IMR-90 (cell line): ENCODE measurements at regions of chr2 and their contacts with region 1.

Region 1: GRCh38 chr2:25131567-25132298 is 36.6 kb downstream of the POMC start:
- DNase-seq: no peak
- ATAC-seq: no peak
- H3K4me3 ChIP-seq: no peak overlapping the region
- H3K27ac ChIP-seq: no peak overlapping the region
- H3K4me1 ChIP-seq: peaks cover 1% of the 10 kb centered on the region; the same call in 1 of the 2 replicates
- H3K27me3 ChIP-seq: peaks cover 6% of the 10 kb centered on the region
- CTCF ChIP-seq: no peak
- POLR2A ChIP-seq: no peak
- RAD21 ChIP-seq: no peak

Region 2: DNA sequence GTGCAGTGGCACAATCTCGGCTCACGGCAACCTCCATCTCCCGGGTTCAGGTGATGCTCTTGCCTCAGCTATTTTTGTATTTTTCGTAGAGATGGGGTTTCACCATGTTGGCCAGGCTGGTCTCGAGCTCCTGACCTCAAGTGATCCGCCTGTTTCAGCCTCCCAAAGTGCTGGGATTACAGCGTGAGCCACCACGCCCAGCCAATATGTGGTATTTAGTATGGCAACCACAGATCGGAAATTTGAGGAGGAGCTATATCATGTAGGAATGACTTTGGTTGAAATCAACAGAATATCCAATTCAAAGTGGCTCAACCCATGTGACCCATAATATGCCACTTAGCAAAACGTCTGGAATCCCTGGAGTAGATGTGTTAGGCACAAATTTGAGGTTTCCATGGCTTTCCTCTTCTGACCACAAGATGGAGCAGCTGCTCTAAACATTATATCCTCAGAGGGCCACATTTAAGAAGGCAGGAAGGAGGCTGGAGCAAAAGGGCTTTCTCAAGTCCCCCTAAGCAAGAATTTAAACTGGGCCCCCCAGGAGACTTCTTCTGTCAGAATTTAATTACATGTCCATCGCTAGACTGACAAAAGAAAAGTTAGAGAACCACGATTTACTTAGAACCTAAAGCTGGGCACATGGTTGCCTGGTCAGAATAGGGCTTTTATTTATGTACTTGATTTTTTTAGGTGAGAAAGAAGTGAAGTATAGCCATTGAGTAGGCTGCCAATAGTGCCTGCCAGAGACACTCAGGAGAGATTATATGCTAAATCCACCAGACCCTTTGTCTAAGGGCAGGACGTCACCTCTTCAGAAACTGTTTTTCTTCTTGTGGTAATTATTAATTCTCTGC is 721.8 kb before region 1 on chr2:
- CTCF ChIA-PET with region 1: interaction called, 5 read pairs
- POLR2A ChIA-PET with region 1: no interaction called
- dilution Hi-C with region 1: no loop called
- in situ Hi-C with region 1: loop called (anchors 25 kb)
- intact Hi-C with region 1: loop called (anchors 1 kb)
- DNase-seq: peak; percentile 74
- ATAC-seq: peak; percentile 91
- H3K4me3 ChIP-seq: no peak overlapping the region
- H3K27ac ChIP-seq: no peak overlapping the region
- H3K4me1 ChIP-seq: no peaks in the 10 kb centered on the region
- H3K27me3 ChIP-seq: peaks cover 2% of the 10 kb centered on the region
- CTCF ChIP-seq: peak; percentile 86
- POLR2A ChIP-seq: no peak
- RAD21 ChIP-seq: peak; percentile 86

Region 3: DNA sequence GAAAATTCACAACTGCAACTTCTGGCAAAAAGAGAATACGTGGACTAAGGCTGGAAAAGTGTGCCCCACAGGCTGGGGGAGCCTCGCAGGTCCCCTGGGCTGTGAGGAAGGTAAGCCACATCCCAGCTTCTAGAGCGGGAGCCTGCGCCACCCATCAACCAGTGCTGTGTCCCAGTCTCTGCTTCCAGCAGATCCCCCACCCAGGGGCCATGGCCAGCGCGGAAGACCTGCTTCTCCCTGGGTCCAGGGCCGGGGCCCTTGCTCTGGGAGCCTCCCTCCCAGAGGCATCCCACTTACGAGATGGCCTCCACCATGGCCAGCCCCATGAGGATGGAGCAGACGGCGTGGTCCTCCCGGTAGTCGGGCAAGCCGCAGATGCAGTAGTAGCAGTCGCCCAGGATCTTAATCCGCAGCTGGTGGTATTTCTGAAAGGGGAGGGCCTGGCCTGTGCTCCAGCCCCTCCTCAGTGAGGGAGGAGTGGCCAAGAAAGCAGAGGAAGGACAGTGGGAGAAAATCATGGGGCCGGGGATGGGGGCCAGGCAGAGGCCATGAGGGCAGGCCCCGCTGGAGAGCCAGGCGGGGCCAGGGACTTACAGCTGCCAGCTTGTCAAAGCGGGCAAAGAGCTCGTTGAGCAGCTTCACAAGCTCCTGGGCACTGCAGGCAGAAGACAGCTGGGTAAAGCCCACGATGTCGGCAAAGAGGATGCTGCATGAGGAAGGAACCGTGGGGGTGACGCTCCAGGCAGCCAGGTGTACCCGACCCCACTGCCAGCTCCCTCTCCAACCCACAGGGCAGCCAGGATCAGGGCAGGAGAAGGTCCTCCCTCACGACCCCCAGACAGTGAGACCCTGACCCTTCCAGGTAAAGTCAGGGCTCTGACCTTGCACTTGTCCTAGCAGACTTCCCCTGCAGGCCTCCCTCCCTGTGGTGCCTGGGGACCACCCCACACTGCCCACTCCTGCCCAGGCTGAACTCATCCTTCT is 290.5 kb before region 1 on chr2:
- CTCF ChIA-PET with region 1: no interaction called
- POLR2A ChIA-PET with region 1: no interaction called
- dilution Hi-C with region 1: no loop called
- in situ Hi-C with region 1: loop called (anchors 10 kb)
- intact Hi-C with region 1: loop called (anchors 10 kb)
- DNase-seq: no peak
- ATAC-seq: no peak
- H3K4me3 ChIP-seq: no peak overlapping the region
- H3K27ac ChIP-seq: no peak overlapping the region
- H3K4me1 ChIP-seq: no peaks in the 10 kb centered on the region
- H3K27me3 ChIP-seq: no peaks in the 10 kb centered on the region
- CTCF ChIP-seq: no peak
- POLR2A ChIP-seq: no peak
- RAD21 ChIP-seq: no peak

Region 4: DNA sequence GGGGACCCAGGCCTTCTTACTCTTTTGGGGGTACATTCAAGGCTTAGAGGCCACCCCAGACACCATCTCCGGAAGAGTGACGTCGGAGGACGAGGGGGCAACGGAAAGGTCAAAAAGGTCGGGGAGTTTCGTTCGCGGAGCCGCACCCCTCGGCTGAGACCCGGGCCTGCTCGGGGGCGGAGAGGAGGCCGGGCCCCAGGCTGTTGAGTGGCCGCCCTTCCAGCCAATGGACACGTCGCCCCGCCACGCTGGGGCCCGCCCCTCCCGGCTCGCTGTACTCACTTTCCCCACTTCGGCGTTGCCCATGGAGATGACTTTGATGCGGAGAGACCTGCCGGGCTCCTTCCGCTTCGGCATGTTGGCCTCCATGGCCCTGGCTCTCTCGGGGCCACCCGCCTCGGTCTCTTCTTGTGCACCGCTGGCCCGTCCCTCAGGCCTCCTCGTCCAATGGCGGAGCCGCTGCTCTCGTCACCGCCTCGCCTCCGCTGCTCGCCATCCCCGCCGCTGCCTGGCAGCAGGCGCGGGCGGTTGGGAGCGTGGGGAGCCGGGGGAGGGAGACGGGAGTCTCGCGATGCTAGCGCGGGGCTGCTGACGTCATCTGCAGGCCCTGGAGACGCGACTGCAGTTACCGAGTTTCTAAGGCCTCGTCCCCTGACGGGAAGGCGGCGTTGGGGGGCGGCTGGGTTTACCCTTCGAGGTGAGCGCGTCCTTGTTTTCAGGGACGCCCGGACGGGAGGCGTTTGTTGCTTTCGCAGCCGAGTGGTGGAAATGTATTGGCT is 160.0 kb before region 1 on chr2 and contains the start of gene DNAJC27:
- CTCF ChIA-PET with region 1: interaction called, 22 read pairs
- POLR2A ChIA-PET with region 1: no interaction called
- dilution Hi-C with region 1: no loop called
- in situ Hi-C with region 1: no loop called
- intact Hi-C with region 1: loop called (anchors 1 kb)
- DNase-seq: peak; percentile 98
- ATAC-seq: peak; percentile 97
- H3K4me3 ChIP-seq: peak within 1 kb of the TSS; percentile 72
- H3K27ac ChIP-seq: peak within 1 kb of the TSS; percentile 96
- H3K4me1 ChIP-seq: no peaks in the 10 kb centered on the region
- H3K27me3 ChIP-seq: no peaks in the 10 kb centered on the region
- CTCF ChIP-seq: no peak
- POLR2A ChIP-seq: peak; percentile 97
- RAD21 ChIP-seq: no peak
- total RNA-seq, gene DNAJC27: 2.0 and 2.8 TPM in 2 replicates

Region 5: GRCh38 chr2:24984912-24985311 is 146.8 kb before region 1 on chr2:
- CTCF ChIA-PET with region 1: no interaction called
- POLR2A ChIA-PET with region 1: no interaction called
- dilution Hi-C with region 1: no loop called
- in situ Hi-C with region 1: loop called (anchors 5 kb)
- intact Hi-C with region 1: no loop called
- DNase-seq: peak; percentile 27
- ATAC-seq: peak; percentile 32; the same call in 1 of the 2 replicates
- H3K4me3 ChIP-seq: no peak overlapping the region
- H3K27ac ChIP-seq: no peak overlapping the region
- H3K4me1 ChIP-seq: peaks cover 1% of the 10 kb centered on the region; the same call in 1 of the 2 replicates
- H3K27me3 ChIP-seq: peaks cover 8% of the 10 kb centered on the region
- CTCF ChIP-seq: no peak
- POLR2A ChIP-seq: no peak
- RAD21 ChIP-seq: no peak

Region 6: DNA sequence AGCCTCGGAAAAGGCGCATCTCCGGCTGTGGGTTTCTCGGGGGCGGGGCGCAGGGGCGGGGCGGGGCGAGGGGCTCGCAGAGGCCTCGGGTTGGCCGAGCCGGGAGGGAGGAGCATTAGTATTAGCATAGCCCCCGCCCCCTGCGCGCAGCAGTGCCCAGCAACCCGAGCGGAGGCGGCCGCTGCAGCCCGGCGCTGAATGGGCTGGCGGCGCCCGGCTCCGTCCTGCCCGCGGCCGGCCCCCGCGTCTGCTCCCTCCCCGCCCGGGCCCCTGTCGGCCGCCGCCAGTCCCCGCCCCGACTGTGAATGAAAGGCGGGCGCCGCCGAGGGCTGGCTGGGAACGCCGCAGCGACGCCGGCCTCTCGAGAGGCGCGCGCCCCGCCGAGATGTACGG is 89.8 kb before region 1 on chr2 and contains the start of gene EFR3B:
- CTCF ChIA-PET with region 1: no interaction called
- POLR2A ChIA-PET with region 1: no interaction called
- dilution Hi-C with region 1: no loop called
- in situ Hi-C with region 1: no loop called
- intact Hi-C with region 1: loop called (anchors 5 kb)
- DNase-seq: peak; percentile 90
- ATAC-seq: peak; percentile 99
- H3K4me3 ChIP-seq: peak within 1 kb of the TSS; percentile 51
- H3K27ac ChIP-seq: no peak within 1 kb of the TSS
- H3K4me1 ChIP-seq: peaks cover 10% of the 10 kb centered on the region
- H3K27me3 ChIP-seq: peaks cover 16% of the 10 kb centered on the region
- CTCF ChIP-seq: no peak
- POLR2A ChIP-seq: peak; percentile 40; the same call in 1 of the 2 replicates
- RAD21 ChIP-seq: no peak
- total RNA-seq, gene EFR3B: 0.90 and 1.1 TPM in 2 replicates

Region 7: DNA sequence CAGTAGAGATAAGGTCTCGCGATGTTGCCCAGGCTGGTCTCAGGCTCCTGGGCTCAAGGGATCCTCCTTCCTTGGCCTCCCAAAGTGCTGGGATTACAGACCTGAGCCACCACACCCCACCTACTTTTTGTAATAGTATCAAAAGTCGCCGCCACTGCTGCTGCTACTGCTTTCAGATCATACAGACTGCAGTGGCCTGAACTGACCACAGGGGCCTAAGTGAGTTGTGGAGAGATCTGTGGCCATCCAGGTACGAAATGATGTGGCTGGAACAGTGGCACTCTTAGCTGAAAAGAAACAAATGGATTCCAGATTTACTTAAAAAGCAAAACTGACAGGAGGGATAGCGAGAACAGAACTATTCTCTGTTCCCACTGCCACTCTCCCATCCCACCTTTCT is 69.5 kb after region 1 on chr2:
- CTCF ChIA-PET with region 1: no interaction called
- POLR2A ChIA-PET with region 1: no interaction called
- dilution Hi-C with region 1: no loop called
- in situ Hi-C with region 1: no loop called
- intact Hi-C with region 1: loop called (anchors 2 kb)
- DNase-seq: no peak
- ATAC-seq: peak; percentile 48; the same call in 1 of the 2 replicates
- H3K4me3 ChIP-seq: no peak overlapping the region
- H3K27ac ChIP-seq: no peak overlapping the region
- H3K4me1 ChIP-seq: peaks cover 1% of the 10 kb centered on the region; the same call in 1 of the 2 replicates
- H3K27me3 ChIP-seq: no peaks in the 10 kb centered on the region; the same call in 1 of the 2 replicates
- CTCF ChIP-seq: 0 out of 2 replicates have a peak, but pooled peaks have one; percentile 18
- POLR2A ChIP-seq: no peak
- RAD21 ChIP-seq: no peak

Region 8: GRCh38 chr2:25453199-25453905 is 321.6 kb after region 1 on chr2:
- CTCF ChIA-PET with region 1: no interaction called
- POLR2A ChIA-PET with region 1: no interaction called
- dilution Hi-C with region 1: no loop called
- in situ Hi-C with region 1: no loop called
- intact Hi-C with region 1: no loop called
- DNase-seq: peak; percentile 10
- ATAC-seq: no peak
- H3K4me3 ChIP-seq: no peak overlapping the region
- H3K27ac ChIP-seq: no peak overlapping the region
- H3K4me1 ChIP-seq: no peaks in the 10 kb centered on the region
- H3K27me3 ChIP-seq: no peaks in the 10 kb centered on the region
- CTCF ChIP-seq: no peak
- POLR2A ChIP-seq: no peak
- RAD21 ChIP-seq: no peak